Ascending aorta (tissue), 2 donors: ENCODE measurements at regions of chr6 and their contacts with region 1.

Region 1: DNA sequence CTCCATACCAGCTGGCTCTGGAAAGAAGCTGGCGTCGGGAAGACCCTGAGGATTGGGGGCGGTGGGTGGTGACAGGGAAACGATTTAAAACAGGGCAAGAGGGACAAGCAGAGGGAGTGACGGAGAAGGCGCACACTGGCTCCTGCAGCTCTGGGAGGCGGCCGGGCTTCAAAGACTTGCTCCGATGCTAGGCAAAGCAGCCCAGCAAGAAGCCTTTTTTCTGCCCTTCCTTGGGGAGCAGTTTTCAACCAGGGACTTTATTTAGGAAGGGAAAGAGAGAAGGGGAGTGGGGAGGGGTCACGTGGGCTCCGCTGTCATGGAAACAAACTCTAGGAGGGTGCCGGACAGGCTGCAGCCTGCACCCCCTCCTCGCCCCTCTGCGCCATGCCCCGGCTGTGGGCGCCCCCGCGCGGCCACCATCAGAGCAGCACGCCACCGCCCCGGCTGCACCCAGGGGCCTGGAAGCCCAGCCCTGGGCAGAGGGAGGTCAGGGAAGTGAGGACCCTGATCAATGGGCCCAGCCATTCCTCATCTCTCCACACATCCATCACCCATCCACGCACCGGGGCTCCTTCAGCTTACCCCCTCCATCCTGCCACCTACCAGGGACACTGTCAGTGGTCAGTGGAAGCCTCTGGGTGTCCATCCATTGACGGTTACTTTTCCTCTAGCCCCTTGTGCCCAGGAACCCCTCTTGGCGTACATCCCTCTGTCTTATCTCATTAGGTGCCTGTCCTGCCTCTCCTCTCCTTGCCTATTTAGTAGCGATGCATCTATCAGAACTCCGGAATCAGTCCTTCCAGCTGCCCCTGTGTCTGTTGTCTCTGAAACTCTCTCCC is 66.6 kb upstream of the CCDC167 start:
- DNase-seq: no peak
- H3K4me3 ChIP-seq: peak overlapping the region; percentile 51 to 63
- H3K27ac ChIP-seq: no peak overlapping the region
- H3K4me1 ChIP-seq: peaks cover 0 to 15% of the 10 kb centered on the region in 2 donors
- H3K27me3 ChIP-seq: no peaks in the 10 kb centered on the region
- CTCF ChIP-seq: peak; percentile 82 to 92 (median 83)

Region 2: DNA sequence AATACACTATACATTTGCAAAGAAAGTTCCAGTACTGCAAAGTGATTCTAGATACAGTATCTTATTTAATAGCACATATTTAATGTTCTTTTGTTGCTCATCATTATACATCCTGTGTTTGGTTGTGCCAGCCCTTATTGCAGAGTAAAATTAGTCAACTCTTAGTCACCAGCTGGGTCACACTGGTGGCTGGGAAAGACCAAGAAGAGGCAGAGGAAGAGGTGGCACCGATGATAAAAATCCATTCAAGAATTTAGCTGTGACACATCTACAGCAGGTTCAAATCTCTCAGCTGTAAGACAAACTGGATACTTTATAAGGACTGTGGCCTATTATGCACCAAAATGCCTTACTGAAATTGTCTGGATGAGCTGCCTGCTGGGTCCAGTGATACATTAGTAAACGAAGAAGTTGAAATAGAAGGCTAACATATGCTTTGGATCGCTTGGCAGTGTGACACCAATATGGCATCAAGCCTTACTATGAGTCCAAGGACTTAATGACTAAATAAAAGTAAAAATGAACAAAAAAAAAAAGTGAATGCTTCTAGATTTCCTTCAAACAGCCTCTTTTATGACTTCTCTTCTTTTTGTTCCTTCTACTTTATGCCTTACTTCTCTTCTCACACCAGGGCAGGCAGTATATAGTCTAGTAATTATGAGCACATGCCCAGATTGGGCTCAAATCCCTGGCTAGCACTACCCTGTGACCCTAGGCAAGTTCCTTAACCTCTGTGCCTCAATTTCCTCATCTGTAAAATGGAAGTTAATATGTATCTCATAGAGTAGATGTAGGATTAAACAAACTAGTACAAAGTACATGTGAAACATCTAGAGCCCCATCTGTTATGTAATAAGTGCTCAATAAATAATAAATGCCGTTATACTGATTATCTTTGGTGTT is 241.9 kb before region 1 on chr6:
- intact Hi-C with region 1: loop called (anchors 1 kb)
- DNase-seq: no peak
- H3K4me3 ChIP-seq: no peak overlapping the region
- H3K27ac ChIP-seq: peak overlapping the region; percentile 38 to 77
- H3K4me1 ChIP-seq: peaks cover 0 to 20% of the 10 kb centered on the region in 2 donors
- H3K27me3 ChIP-seq: no peaks in the 10 kb centered on the region
- CTCF ChIP-seq: no peak

Region 3: DNA sequence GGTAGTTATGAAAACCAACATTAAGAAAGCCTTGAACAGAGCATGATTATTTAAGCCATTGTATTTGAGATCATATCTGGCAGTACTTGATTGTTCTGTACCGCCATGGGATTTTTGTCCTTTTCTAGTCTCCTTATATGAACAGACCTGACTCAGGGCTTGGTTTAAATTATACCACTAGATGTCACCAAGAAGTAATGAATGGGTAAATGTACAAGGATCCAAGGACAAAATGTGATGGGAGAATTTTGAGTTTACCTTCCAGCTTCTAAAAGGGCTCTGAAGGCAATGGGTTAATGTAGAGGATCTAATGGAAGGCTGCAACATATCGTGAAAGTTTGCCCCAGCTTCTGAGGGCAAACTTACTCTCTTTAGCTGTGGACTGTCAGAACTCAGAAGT is 200.6 kb before region 1 on chr6:
- intact Hi-C with region 1: loop called (anchors 1 kb)
- DNase-seq: no peak
- H3K4me3 ChIP-seq: no peak overlapping the region
- H3K27ac ChIP-seq: peak overlapping the region; percentile 40 to 47
- H3K4me1 ChIP-seq: peaks cover 7 to 15% of the 10 kb centered on the region in 2 donors
- H3K27me3 ChIP-seq: no peaks in the 10 kb centered on the region
- CTCF ChIP-seq: peak in 2 of 3 experiments; percentile 35 to 58

Region 4: DNA sequence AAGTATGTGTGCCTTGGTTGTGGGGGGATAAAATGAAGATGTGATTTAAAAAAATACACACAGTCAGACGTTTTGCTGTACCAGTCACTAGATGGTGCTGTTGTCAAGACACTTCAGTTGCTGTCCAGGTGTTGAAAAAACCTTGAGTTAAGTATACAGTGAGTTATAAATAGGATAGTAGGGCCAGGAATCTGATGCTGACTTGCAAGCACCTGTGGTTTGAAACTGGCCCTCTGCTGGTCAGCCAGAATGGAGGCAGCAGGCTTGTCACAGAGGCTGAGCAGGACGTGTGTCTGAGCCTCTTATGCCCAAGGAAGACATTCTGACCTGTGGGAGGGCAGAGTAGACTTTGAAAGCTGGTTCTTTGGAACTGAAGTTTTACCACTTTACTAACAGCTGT is 184.8 kb before region 1 on chr6:
- intact Hi-C with region 1: loop called (anchors 5 kb)
- DNase-seq: no peak
- H3K4me3 ChIP-seq: no peak overlapping the region
- H3K27ac ChIP-seq: no peak overlapping the region
- H3K4me1 ChIP-seq: no peaks in the 10 kb centered on the region
- H3K27me3 ChIP-seq: no peaks in the 10 kb centered on the region
- CTCF ChIP-seq: peak; percentile 15 to 42 (median 28)

Region 5: GRCh38 chr6:37483917-37484785 is 82.2 kb before region 1 on chr6:
- intact Hi-C with region 1: loop called (anchors 1 kb)
- DNase-seq: no peak
- H3K4me3 ChIP-seq: no peak overlapping the region
- H3K27ac ChIP-seq: no peak overlapping the region
- H3K4me1 ChIP-seq: no peaks in the 10 kb centered on the region
- H3K27me3 ChIP-seq: no peaks in the 10 kb centered on the region
- CTCF ChIP-seq: peak; percentile 63 to 80 (median 67)